ENCODE measurements at regions of chr19 and their contacts with region 1.

Region 1: GRCh38 chr19:41353466-41354342 is at the start of gene TGFB1:
- DNase-seq: peak; percentile 39 to 91
- H3K4me3 ChIP-seq: peak within 1 kb of the TSS; percentile 80
- H3K27ac ChIP-seq: no peak within 1 kb of the TSS
- H3K4me1 ChIP-seq: peaks cover 15% of the 10 kb centered on the region
- H3K27me3 ChIP-seq: no peaks in the 10 kb centered on the region
- CTCF ChIP-seq: peak; percentile 79
- total RNA-seq, gene TGFB1: 67.9 and 74.9 TPM in 2 replicates

Region 2: GRCh38 chr19:40285353-40286234 is 1068.1 kb before region 1 on chr19:
- CTCF ChIA-PET with region 1: no interaction called
- POLR2A ChIA-PET with region 1: interaction called, 13 read pairs
- intact Hi-C with region 1: no loop called
- DNase-seq: peak; percentile 97 to 98
- H3K4me3 ChIP-seq: peak overlapping the region; percentile 53
- H3K27ac ChIP-seq: peak overlapping the region; percentile 83
- H3K4me1 ChIP-seq: peaks cover 17% of the 10 kb centered on the region; the same call in 1 of the 2 replicates
- H3K27me3 ChIP-seq: no peaks in the 10 kb centered on the region
- CTCF ChIP-seq: no peak

Region 3: DNA sequence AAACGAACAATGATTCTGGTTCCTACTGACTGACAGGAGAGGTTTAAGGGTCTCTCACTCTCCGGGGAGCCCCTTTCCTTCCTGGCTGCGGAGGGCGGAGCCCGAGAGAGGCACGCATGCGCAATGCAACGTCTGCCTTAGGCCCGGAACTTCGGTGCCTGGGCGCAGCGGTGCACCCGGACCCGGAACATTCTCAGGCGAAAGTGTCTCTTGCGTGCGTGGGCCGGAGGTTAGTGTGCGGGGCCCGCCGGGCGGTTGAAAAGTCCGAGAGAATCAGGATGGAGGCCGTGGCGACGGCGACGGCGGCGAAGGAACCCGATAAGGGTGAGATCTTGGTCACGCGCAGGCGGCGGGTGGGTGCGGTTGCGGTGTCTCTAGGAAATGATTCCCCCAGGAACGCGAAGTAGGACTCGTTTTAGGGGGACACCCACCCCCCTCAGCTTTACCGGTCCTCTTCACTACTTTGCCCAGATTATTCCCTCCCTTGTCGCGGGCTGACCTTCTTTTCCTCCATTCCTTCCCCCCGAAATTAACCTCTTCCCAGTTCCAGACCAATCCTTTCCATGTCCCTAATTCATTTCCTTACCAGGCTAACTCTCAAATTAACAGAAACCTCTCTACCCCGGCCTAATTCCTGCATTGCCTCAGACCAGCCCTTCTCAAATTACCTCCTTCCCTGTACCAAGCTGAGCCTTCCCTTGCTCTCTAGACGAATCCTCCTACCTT is 43.5 kb before region 1 on chr19 and contains the start of gene CCDC97:
- CTCF ChIA-PET with region 1: no interaction called
- POLR2A ChIA-PET with region 1: no interaction called
- intact Hi-C with region 1: loop called (anchors 1 kb)
- DNase-seq: peak; percentile 67 to 84
- H3K4me3 ChIP-seq: peak within 1 kb of the TSS; percentile 88
- H3K27ac ChIP-seq: peak within 1 kb of the TSS; percentile 87
- H3K4me1 ChIP-seq: peaks cover 16% of the 10 kb centered on the region
- H3K27me3 ChIP-seq: no peaks in the 10 kb centered on the region
- CTCF ChIP-seq: no peak
- total RNA-seq, gene CCDC97: 24.1 and 26.4 TPM in 2 replicates

Region 4: GRCh38 chr19:41363753-41364523 is 10.2 kb after region 1 on chr19 and contains the start of gene B9D2:
- CTCF ChIA-PET with region 1: interaction called, 10 read pairs
- POLR2A ChIA-PET with region 1: no interaction called
- intact Hi-C with region 1: no loop called
- DNase-seq: peak; percentile 93 to 97
- H3K4me3 ChIP-seq: peak within 1 kb of the TSS; percentile 78
- H3K27ac ChIP-seq: peak within 1 kb of the TSS; percentile 88
- H3K4me1 ChIP-seq: peaks cover 21% of the 10 kb centered on the region
- H3K27me3 ChIP-seq: no peaks in the 10 kb centered on the region
- CTCF ChIP-seq: no peak
- total RNA-seq, gene B9D2: 8.0 and 10.8 TPM in 2 replicates

Region 5: DNA sequence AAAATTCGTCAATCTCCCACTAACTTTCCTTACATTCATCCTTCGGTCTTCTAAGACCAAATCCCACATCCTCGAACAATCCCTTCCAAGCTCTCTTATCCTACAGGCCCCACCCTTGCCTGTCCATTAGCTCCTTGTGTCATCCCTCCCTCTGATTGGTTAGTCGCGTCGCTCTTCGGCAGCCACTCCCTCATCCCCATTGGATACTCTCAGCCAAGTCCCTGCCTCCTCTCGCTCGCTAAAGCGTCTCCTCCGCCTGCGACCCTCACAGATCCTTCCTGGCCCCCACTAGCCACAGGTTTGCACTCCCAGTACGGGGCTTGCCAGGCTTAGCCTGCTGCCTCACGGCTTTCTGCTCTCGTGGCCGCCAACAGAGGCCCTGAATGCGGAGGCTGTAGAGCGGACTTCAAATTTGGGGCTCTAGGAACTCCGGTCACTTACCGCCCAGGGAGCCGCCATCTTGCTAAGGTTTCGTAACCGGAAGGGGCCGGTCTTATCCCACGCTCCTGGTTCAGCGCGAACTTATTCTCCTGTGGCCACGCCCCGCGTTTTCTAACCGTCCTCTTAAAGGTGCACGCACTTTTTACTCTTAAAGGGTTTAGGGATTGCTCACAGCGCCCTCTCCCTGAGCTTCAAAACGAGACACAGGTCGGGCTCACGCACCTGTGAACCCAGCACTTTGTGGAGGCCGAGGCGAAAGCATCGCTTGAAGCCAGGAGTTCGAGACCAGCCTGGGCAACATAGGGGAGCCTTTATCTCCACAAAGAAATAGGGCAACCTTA is 85.9 kb after region 1 on chr19 and contains the start of gene DMAC2:
- CTCF ChIA-PET with region 1: no interaction called
- POLR2A ChIA-PET with region 1: no interaction called
- intact Hi-C with region 1: loop called (anchors 10 kb)
- DNase-seq: peak; percentile 91 to 94
- H3K4me3 ChIP-seq: peak within 1 kb of the TSS; percentile 76
- H3K27ac ChIP-seq: peak within 1 kb of the TSS; percentile 77
- H3K4me1 ChIP-seq: peaks cover 7% of the 10 kb centered on the region; the same call in 1 of the 2 replicates
- H3K27me3 ChIP-seq: peaks cover 7% of the 10 kb centered on the region; the same call in 1 of the 2 replicates
- CTCF ChIP-seq: peak; percentile 61; the same call in 1 of the 2 replicates
- total RNA-seq, gene DMAC2: 38.6 and 42.6 TPM in 2 replicates

Measured in PC-9 (cell line).